AG04449 (cell line): ENCODE measurements at regions of chr5 and their contacts with region 1.

Region 1: GRCh38 chr5:142888469-142889085 is 118.4 kb downstream of the ARHGAP26 start:
- DNase-seq: no peak
- H3K4me3 ChIP-seq: no peak overlapping the region
- CTCF ChIP-seq: peak; percentile 45

Region 2: GRCh38 chr5:142860270-142860669 is 28.3 kb before region 1 on chr5:
- CTCF ChIA-PET with region 1: interaction called, 18 read pairs
- POLR2A ChIA-PET with region 1: no interaction called
- DNase-seq: no peak
- H3K4me3 ChIP-seq: no peak overlapping the region
- CTCF ChIP-seq: no peak

Region 3: GRCh38 chr5:142874537-142874936 is 14.0 kb before region 1 on chr5:
- CTCF ChIA-PET with region 1: interaction called, 226 read pairs
- POLR2A ChIA-PET with region 1: no interaction called
- DNase-seq: no peak
- H3K4me3 ChIP-seq: no peak overlapping the region
- CTCF ChIP-seq: no peak

Region 4: GRCh38 chr5:142915813-142916424 is 27.3 kb after region 1 on chr5:
- CTCF ChIA-PET with region 1: interaction called, 36 read pairs
- POLR2A ChIA-PET with region 1: no interaction called
- DNase-seq: no peak
- H3K4me3 ChIP-seq: no peak overlapping the region
- CTCF ChIP-seq: peak; percentile 65